CD4-positive, alpha-beta memory T cell (primary cell): ENCODE measurements at regions of chrX and their contacts with region 1.

Region 1: GRCh38 chrX:132488819-132489577 is at the start of gene MBNL3:
- DNase-seq: peak; percentile 61 to 84 (median 73)
- H3K4me3 ChIP-seq: peak within 1 kb of the TSS in 1 of 2 donors; percentile 68
- H3K4me3 Mint-ChIP-seq: peak within 1 kb of the TSS; percentile 94 to 97 (median 96)
- H3K27ac ChIP-seq: peak within 1 kb of the TSS; percentile 71
- H3K27ac Mint-ChIP-seq: peak within 1 kb of the TSS; percentile 93 to 98 (median 95)
- H3K4me1 ChIP-seq: peaks cover 39% of the 10 kb centered on the region
- H3K4me1 Mint-ChIP-seq: peaks cover 28 to 55% (median 45%) of the 10 kb centered on the region in 4 donors
- H3K27me3 ChIP-seq: no peaks in the 10 kb centered on the region
- H3K27me3 Mint-ChIP-seq: no peaks in the 10 kb centered on the region
- total RNA-seq, gene MBNL3: 36.6 to 39.6 TPM

Region 2: GRCh38 chrX:131841496-131842410 is 647.2 kb before region 1 on chrX:
- CTCF ChIA-PET with region 1: no interaction called
- POLR2A ChIA-PET with region 1: no interaction called
- intact Hi-C with region 1: loop called (anchors 10 kb)
- DNase-seq: peak in 4 of 5 donors; percentile 50 to 65 (median 52)
- H3K4me3 ChIP-seq: no peak overlapping the region
- H3K4me3 Mint-ChIP-seq: peak overlapping the region in 1 of 8 donors; percentile 16
- H3K27ac ChIP-seq: no peak overlapping the region
- H3K27ac Mint-ChIP-seq: peak overlapping the region in 1 of 7 donors; percentile 12
- H3K4me1 ChIP-seq: no peaks in the 10 kb centered on the region
- H3K4me1 Mint-ChIP-seq: peaks cover 0 to 8% (median 5%) of the 10 kb centered on the region in 4 donors
- H3K27me3 ChIP-seq: no peaks in the 10 kb centered on the region
- H3K27me3 Mint-ChIP-seq: no peaks in the 10 kb centered on the region

Region 3: GRCh38 chrX:131874300-131874699 is 614.7 kb before region 1 on chrX:
- CTCF ChIA-PET with region 1: no interaction called
- POLR2A ChIA-PET with region 1: no interaction called
- intact Hi-C with region 1: no loop called
- DNase-seq: no peak
- H3K4me3 ChIP-seq: no peak overlapping the region
- H3K4me3 Mint-ChIP-seq: no peak overlapping the region
- H3K27ac ChIP-seq: no peak overlapping the region
- H3K27ac Mint-ChIP-seq: no peak overlapping the region
- H3K4me1 ChIP-seq: no peaks in the 10 kb centered on the region
- H3K4me1 Mint-ChIP-seq: no peaks in the 10 kb centered on the region
- H3K27me3 ChIP-seq: no peaks in the 10 kb centered on the region
- H3K27me3 Mint-ChIP-seq: no peaks in the 10 kb centered on the region

Region 4: DNA sequence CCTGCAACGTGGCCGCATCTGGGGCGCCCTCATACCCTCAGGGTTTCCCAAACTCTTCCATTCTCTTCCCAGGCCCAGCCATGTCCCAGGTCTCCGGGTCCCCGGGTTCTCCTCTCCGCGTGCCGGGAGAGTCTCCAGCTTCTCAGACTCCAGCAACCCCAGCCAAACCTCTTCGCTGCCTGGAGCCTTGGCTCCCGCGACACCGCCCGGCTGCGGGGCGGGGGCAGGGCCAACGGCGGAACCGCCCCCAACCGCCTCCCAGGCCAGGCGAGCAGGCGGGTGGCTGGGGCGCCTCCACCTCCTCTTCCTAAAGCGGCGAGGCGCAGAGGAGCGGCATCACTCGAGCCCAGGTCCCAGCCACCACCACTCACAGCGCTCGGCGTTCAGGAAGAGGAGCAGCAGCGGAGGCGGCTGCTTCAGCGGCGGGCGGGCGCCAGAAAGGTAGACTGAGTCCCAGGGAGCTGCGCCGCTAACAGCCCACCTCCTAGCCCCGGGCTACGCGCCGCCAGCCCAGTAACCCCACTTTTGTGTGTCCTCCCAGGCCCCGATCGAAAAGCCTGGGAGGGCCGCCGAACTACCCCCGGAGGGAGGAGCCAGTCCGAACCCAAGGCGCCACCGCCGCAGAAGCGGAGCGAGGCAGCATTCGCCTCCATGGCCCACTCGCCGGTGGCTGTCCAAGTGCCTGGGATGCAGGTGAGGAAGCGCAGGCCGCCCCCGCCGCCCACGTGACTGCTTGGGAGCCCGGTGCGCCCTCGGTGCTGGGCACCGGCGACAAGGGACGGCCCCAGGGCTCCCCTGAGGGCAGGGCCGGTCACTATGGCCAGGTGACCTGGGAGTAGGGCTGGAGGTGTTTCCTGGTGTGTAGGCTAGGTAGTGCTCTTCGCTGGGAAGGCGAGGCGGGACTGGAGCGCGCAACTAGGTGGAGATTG is 465.8 kb before region 1 on chrX and contains the start of gene STK26:
- CTCF ChIA-PET with region 1: no interaction called
- POLR2A ChIA-PET with region 1: interaction called, 4 read pairs
- intact Hi-C with region 1: loop called (anchors 2 kb)
- DNase-seq: peak; percentile 75 to 80 (median 78)
- H3K4me3 ChIP-seq: peak within 1 kb of the TSS; percentile 29 to 76
- H3K4me3 Mint-ChIP-seq: peak within 1 kb of the TSS; percentile 91 to 96 (median 94)
- H3K27ac ChIP-seq: peak within 1 kb of the TSS; percentile 75
- H3K27ac Mint-ChIP-seq: peak within 1 kb of the TSS; percentile 90 to 96 (median 94)
- H3K4me1 ChIP-seq: peaks cover 26% of the 10 kb centered on the region
- H3K4me1 Mint-ChIP-seq: peaks cover 12 to 38% (median 25%) of the 10 kb centered on the region in 4 donors
- H3K27me3 ChIP-seq: no peaks in the 10 kb centered on the region
- H3K27me3 Mint-ChIP-seq: no peaks in the 10 kb centered on the region
- total RNA-seq, gene STK26: 38.1 to 41.7 TPM

Region 5: DNA sequence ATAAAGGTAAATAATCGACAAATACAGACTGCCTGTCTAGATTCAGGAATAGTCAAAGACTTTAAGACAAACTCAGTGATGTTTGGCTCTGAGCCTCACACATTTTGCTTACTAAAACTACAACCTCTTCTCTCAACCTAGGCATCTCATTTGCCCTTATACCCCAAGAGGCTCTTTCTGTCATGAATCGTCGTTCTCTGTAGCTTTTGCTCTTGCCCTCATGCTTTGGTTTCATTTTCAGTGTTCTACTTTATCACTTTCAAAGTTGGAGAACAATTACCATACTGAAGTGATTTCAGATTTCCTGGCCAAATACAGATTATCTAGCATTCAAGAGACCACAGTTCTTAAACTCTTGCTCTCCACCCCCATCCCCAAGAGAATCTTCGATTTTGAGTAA is 155.6 kb before region 1 on chrX:
- CTCF ChIA-PET with region 1: no interaction called
- POLR2A ChIA-PET with region 1: no interaction called
- intact Hi-C with region 1: no loop called
- DNase-seq: no peak
- H3K4me3 ChIP-seq: no peak overlapping the region
- H3K4me3 Mint-ChIP-seq: peak overlapping the region in 3 of 8 donors; percentile 2 to 12 (median 3)
- H3K27ac ChIP-seq: no peak overlapping the region
- H3K27ac Mint-ChIP-seq: peak overlapping the region in 1 of 7 donors; percentile 9
- H3K4me1 ChIP-seq: no peaks in the 10 kb centered on the region
- H3K4me1 Mint-ChIP-seq: peaks cover 2 to 9% (median 5%) of the 10 kb centered on the region in 4 donors
- H3K27me3 ChIP-seq: no peaks in the 10 kb centered on the region
- H3K27me3 Mint-ChIP-seq: no peaks in the 10 kb centered on the region

Region 6: DNA sequence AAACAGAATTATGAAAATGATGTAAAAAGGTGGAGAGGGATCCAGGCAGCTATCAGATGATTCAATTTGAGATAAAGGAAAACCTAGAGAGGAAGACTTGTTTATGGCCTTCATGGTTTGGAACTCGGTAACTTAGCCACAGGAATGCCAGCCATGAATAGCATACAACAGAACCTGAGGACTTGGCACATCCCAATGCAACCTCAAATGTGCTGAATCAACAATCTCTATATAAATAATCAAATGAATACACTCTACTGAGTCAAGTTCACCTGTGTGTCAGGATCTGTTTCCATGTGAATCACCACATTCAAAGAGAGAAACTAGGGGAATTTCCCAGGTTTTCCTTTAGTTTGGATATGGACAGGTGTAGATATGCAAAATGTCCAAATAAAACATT is 87.1 kb before region 1 on chrX:
- CTCF ChIA-PET with region 1: no interaction called
- POLR2A ChIA-PET with region 1: no interaction called
- intact Hi-C with region 1: loop called (anchors 10 kb)
- DNase-seq: no peak
- H3K4me3 ChIP-seq: no peak overlapping the region
- H3K4me3 Mint-ChIP-seq: no peak overlapping the region
- H3K27ac ChIP-seq: no peak overlapping the region
- H3K27ac Mint-ChIP-seq: no peak overlapping the region
- H3K4me1 ChIP-seq: no peaks in the 10 kb centered on the region
- H3K4me1 Mint-ChIP-seq: peaks cover 0 to 5% (median 1%) of the 10 kb centered on the region in 4 donors
- H3K27me3 ChIP-seq: no peaks in the 10 kb centered on the region
- H3K27me3 Mint-ChIP-seq: no peaks in the 10 kb centered on the region

Region 7: GRCh38 chrX:132474522-132474921 is 14.5 kb before region 1 on chrX:
- CTCF ChIA-PET with region 1: interaction called, 5 read pairs
- POLR2A ChIA-PET with region 1: interaction called, 53 read pairs
- intact Hi-C with region 1: loop called (anchors 2 kb)
- DNase-seq: no peak
- H3K4me3 ChIP-seq: no peak overlapping the region
- H3K4me3 Mint-ChIP-seq: peak overlapping the region in 3 of 8 donors; percentile 5 to 60 (median 7)
- H3K27ac ChIP-seq: no peak overlapping the region
- H3K27ac Mint-ChIP-seq: peak overlapping the region in 1 of 7 donors; percentile 65
- H3K4me1 ChIP-seq: peaks cover 13% of the 10 kb centered on the region
- H3K4me1 Mint-ChIP-seq: peaks cover 7 to 25% (median 17%) of the 10 kb centered on the region in 4 donors
- H3K27me3 ChIP-seq: no peaks in the 10 kb centered on the region
- H3K27me3 Mint-ChIP-seq: no peaks in the 10 kb centered on the region